Caco-2 (cell line): ENCODE measurements at regions of chr21 and their contacts with region 1.

Region 1: GRCh38 chr21:45330075-45330781 is 42.5 kb upstream of the POFUT2 start:
- DNase-seq: peak; percentile 86 to 91
- H3K4me3 ChIP-seq: peak overlapping the region; percentile 42
- H3K4me3 Mint-ChIP-seq: peak overlapping the region; percentile 76
- H3K27ac Mint-ChIP-seq: peak overlapping the region; percentile 92
- H3K4me1 ChIP-seq: peaks cover 64% of the 10 kb centered on the region
- H3K4me1 Mint-ChIP-seq: peaks cover 41% of the 10 kb centered on the region
- H3K27me3 ChIP-seq: no peaks in the 10 kb centered on the region
- H3K27me3 Mint-ChIP-seq: no peaks in the 10 kb centered on the region
- CTCF ChIP-seq: no peak

Region 2: DNA sequence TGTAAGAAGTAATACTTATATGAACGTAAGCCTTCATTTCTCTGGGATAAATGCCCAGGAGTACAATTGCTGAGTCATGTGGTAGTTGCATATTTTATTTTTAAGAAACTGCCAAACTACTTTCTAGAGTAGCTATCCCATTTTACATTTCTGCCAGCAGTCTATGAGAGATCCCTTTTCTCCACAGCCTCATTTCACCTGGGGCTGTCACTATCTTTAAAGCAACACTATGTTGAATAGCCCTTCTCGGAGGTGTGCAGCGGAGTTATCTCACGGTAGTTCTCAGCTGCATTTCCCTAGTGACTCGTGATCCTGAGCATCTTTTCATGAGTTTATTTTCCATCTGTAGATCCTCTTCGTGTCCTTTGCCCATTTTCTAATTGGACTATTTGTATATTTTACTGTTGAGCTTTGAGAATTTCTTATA is 162.4 kb before region 1 on chr21:
- CTCF ChIA-PET with region 1: no interaction called
- POLR2A ChIA-PET with region 1: no interaction called
- intact Hi-C with region 1: no loop called
- DNase-seq: no peak
- H3K4me3 ChIP-seq: no peak overlapping the region
- H3K4me3 Mint-ChIP-seq: no peak overlapping the region
- H3K27ac Mint-ChIP-seq: no peak overlapping the region
- H3K4me1 ChIP-seq: no peaks in the 10 kb centered on the region
- H3K4me1 Mint-ChIP-seq: no peaks in the 10 kb centered on the region
- H3K27me3 ChIP-seq: no peaks in the 10 kb centered on the region
- H3K27me3 Mint-ChIP-seq: no peaks in the 10 kb centered on the region
- CTCF ChIP-seq: no peak

Region 3: GRCh38 chr21:45287438-45288391 is 42.5 kb before region 1 on chr21 and contains the start of gene POFUT2:
- CTCF ChIA-PET with region 1: interaction called, 4 read pairs
- POLR2A ChIA-PET with region 1: interaction called, 5 read pairs
- intact Hi-C with region 1: loop called (anchors 5 kb)
- DNase-seq: peak; percentile 96 to 98
- H3K4me3 ChIP-seq: peak within 1 kb of the TSS; percentile 91
- H3K4me3 Mint-ChIP-seq: peak within 1 kb of the TSS; percentile 72
- H3K27ac Mint-ChIP-seq: peak within 1 kb of the TSS; percentile 66
- H3K4me1 ChIP-seq: peaks cover 9% of the 10 kb centered on the region
- H3K4me1 Mint-ChIP-seq: peaks cover 6% of the 10 kb centered on the region
- H3K27me3 ChIP-seq: no peaks in the 10 kb centered on the region
- H3K27me3 Mint-ChIP-seq: no peaks in the 10 kb centered on the region
- CTCF ChIP-seq: no peak
- total RNA-seq, gene POFUT2: 32.0 and 36.5 TPM in 2 replicates

Region 4: DNA sequence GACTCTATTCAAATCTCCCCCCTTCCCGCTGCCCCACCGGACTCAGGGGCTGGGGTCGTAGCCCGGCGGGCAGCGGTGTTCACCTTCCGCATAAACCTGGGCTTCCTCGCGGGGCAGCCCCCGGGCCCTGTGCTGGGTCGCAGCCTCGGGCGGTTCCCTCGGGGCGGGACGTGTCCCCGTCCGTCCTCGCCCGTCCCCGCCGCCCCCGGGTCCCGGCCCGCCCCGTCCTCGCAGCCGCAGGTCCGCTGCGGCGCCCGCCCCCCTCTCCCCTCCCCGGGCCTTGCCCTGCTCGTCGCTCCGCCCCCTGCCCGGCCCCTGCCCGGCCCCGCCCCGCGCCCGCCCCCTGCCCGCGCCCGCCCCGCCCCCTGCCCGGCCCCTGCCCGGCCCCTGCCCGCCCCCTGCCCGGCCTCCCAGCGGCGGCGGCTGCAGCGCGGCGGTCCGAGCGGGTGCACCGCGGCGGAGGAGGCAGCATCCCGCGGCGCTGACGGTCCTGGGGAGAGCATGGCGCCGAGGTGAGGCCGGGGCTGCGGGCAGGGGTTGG is 74.6 kb after region 1 on chr21 and contains the start of gene COL18A1:
- CTCF ChIA-PET with region 1: interaction called, 9 read pairs
- POLR2A ChIA-PET with region 1: interaction called, 3 read pairs
- intact Hi-C with region 1: loop called (anchors 2 kb)
- DNase-seq: peak; percentile 75 to 81
- H3K4me3 ChIP-seq: peak within 1 kb of the TSS; percentile 78
- H3K4me3 Mint-ChIP-seq: peak within 1 kb of the TSS; percentile 76
- H3K27ac Mint-ChIP-seq: peak within 1 kb of the TSS; percentile 57
- H3K4me1 ChIP-seq: peaks cover 44% of the 10 kb centered on the region
- H3K4me1 Mint-ChIP-seq: peaks cover 21% of the 10 kb centered on the region
- H3K27me3 ChIP-seq: no peaks in the 10 kb centered on the region
- H3K27me3 Mint-ChIP-seq: no peaks in the 10 kb centered on the region
- CTCF ChIP-seq: no peak
- total RNA-seq, gene COL18A1: 160 and 170 TPM in 2 replicates

Region 5: GRCh38 chr21:45525153-45526025 is 195.2 kb after region 1 on chr21:
- CTCF ChIA-PET with region 1: no interaction called
- POLR2A ChIA-PET with region 1: no interaction called
- intact Hi-C with region 1: no loop called
- DNase-seq: peak in 1 of 2 experiments; percentile 27
- H3K4me3 ChIP-seq: no peak overlapping the region
- H3K4me3 Mint-ChIP-seq: no peak overlapping the region
- H3K27ac Mint-ChIP-seq: no peak overlapping the region
- H3K4me1 ChIP-seq: no peaks in the 10 kb centered on the region
- H3K4me1 Mint-ChIP-seq: no peaks in the 10 kb centered on the region
- H3K27me3 ChIP-seq: no peaks in the 10 kb centered on the region
- H3K27me3 Mint-ChIP-seq: no peaks in the 10 kb centered on the region
- CTCF ChIP-seq: no peak

Region 6: DNA sequence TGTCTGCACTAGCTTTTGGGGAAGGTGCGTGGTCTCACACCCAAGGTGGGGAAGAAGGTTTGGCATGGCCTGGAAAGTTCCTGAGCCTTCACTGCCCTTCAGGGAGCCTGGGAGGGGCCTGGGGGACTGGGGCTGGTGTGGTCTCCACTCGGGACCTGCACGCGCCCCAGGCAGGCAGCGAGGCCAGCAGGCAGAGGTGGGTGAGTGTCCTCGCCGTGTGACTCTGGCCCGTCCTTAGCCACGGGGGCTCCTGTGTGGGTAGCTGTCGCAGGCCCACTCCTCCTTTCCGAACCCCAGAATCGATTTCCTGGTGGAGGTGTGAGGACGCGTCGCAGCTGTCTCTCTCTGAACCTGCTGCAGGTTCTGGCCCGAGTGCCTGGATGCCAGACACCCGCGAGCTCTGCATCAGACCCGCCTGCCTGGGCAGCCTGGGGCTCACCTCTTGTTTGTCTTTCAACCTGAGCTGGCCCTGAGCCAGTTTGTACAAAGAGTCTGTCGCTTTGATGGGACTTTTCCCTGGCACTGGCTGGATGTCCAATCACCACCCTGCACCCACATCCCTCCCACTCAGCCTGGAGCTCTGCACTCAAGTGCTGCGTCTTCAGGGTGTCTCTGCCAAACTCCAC is 248.1 kb after region 1 on chr21:
- CTCF ChIA-PET with region 1: no interaction called
- POLR2A ChIA-PET with region 1: no interaction called
- intact Hi-C with region 1: no loop called
- DNase-seq: peak in 1 of 2 experiments; percentile 33
- H3K4me3 ChIP-seq: no peak overlapping the region
- H3K4me3 Mint-ChIP-seq: no peak overlapping the region
- H3K27ac Mint-ChIP-seq: no peak overlapping the region
- H3K4me1 ChIP-seq: no peaks in the 10 kb centered on the region
- H3K4me1 Mint-ChIP-seq: no peaks in the 10 kb centered on the region
- H3K27me3 ChIP-seq: no peaks in the 10 kb centered on the region
- H3K27me3 Mint-ChIP-seq: peaks cover 6% of the 10 kb centered on the region
- CTCF ChIP-seq: no peak